Natural killer cell (primary cell): ENCODE measurements at regions of chr16 and their contacts with region 1.

Region 1: GRCh38 chr16:75064403-75065148 is 52.0 kb downstream of the LDHD start:
- DNase-seq: peak in 1 of 2 donors; percentile 45
- ATAC-seq: peak; percentile 22 to 28 (median 25)
- H3K4me3 ChIP-seq: no peak overlapping the region
- H3K4me3 Mint-ChIP-seq: peak overlapping the region; percentile 84
- H3K27ac ChIP-seq: no peak overlapping the region
- H3K27ac Mint-ChIP-seq: peak overlapping the region; percentile 53 to 84
- H3K4me1 ChIP-seq: peaks cover 30% of the 10 kb centered on the region
- H3K4me1 Mint-ChIP-seq: peaks cover 17 to 20% of the 10 kb centered on the region in 2 donors
- H3K27me3 ChIP-seq: no peaks in the 10 kb centered on the region
- H3K27me3 Mint-ChIP-seq: peaks cover 21 to 30% of the 10 kb centered on the region in 2 donors
- CTCF ChIP-seq: no peak

Region 2: DNA sequence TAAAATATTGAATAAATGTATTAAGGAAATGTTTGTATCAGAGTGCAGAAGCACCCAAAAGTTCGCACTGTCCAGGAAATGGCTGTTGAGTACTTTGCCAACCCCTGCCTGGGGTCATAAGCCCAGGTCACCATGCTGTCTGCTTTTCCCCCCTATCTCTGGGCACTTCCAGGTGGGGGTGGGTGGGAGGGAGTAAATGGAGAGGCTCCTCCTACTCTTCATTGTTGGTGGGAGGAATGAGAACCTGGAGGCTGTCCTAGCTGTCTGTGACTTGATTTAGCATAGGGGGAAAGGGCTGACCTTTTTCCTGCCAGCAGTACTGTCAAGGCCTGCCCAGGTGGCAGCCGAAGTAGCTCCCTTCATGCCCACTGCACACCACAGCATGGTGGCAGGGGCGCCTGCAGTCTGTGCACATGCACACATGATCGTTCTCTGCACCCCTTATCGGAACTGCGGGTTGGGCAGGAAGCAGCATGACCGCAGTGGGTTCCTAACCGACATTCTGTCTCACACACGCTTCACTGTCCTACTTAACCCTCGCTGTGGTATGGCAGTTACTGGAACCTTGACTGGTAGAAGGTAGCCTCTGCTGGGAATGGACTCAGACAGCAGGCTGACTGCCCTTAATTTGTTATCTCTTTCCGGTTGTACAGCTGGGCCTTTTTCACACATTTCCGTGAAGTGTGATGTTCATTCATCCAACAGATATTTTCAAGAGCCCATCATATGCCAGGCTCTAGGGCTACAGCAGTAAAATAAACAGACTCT is 10.5 kb after region 1 on chr16:
- intact Hi-C with region 1: loop called (anchors 1 kb)
- DNase-seq: peak; percentile 77 to 92
- ATAC-seq: peak; percentile 88 to 97 (median 97)
- H3K4me3 ChIP-seq: no peak overlapping the region
- H3K4me3 Mint-ChIP-seq: peak overlapping the region; percentile 83
- H3K27ac ChIP-seq: no peak overlapping the region
- H3K27ac Mint-ChIP-seq: peak overlapping the region; percentile 45 to 78
- H3K4me1 ChIP-seq: peaks cover 26% of the 10 kb centered on the region
- H3K4me1 Mint-ChIP-seq: peaks cover 26 to 30% of the 10 kb centered on the region in 2 donors
- H3K27me3 ChIP-seq: no peaks in the 10 kb centered on the region
- H3K27me3 Mint-ChIP-seq: peaks cover 41 to 51% of the 10 kb centered on the region in 2 donors
- CTCF ChIP-seq: no peak